Left cardiac atrium (tissue), 4 donors: ENCODE measurements at regions of chr6 and their contacts with region 1.

Region 1: GRCh38 chr6:7107578-7108195 is at the start of gene RREB1:
- DNase-seq: peak; percentile 71
- ATAC-seq: peak; percentile 74 to 80
- total RNA-seq, gene RREB1: 34.2 to 37.6 TPM

Region 2: DNA sequence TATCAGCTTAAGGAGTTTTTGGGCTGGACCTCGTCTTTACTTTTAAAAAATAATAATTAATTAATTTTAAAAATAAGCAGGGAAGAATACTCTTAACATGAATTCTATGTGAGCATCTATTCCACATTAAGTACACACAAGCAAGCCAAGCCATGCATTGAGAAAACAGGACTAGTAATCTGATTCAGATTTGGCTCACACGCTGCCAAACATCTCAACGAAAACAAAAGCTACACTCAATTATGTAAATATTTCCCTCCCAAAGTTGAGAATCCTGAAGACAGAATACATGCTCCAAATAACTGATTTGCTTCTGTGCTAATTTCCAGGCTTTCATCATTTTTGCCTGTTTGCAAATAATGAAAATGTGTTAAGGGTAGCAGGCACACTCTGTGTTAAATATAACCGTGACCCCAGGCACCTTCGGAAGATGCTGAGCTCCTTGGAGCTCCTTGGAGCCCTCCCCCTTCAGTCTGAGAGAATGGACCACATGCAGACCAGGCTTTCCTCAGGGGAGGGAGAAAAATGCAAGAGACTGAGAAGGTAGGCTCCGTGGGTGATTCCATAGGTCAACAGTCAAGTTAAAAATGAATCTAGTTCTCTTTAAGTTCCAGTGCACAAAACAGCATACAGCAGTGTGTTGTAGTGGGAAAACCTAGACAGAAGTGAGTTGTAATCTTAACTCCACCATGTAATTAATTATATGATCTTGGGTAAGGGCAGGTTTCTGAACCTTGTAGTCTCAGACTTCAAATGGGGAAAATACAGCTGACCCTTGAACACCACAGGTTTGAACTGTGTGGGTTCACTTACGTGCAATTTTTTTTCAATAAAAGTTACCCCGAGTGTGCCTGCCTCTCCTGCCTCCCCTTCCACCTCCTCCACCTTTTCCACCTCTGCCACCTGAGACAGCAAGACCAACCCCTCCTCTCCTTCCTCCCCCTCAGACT is 161.2 kb before region 1 on chr6:
- intact Hi-C with region 1: no loop called
- DNase-seq: no peak
- ATAC-seq: no peak

Region 3: DNA sequence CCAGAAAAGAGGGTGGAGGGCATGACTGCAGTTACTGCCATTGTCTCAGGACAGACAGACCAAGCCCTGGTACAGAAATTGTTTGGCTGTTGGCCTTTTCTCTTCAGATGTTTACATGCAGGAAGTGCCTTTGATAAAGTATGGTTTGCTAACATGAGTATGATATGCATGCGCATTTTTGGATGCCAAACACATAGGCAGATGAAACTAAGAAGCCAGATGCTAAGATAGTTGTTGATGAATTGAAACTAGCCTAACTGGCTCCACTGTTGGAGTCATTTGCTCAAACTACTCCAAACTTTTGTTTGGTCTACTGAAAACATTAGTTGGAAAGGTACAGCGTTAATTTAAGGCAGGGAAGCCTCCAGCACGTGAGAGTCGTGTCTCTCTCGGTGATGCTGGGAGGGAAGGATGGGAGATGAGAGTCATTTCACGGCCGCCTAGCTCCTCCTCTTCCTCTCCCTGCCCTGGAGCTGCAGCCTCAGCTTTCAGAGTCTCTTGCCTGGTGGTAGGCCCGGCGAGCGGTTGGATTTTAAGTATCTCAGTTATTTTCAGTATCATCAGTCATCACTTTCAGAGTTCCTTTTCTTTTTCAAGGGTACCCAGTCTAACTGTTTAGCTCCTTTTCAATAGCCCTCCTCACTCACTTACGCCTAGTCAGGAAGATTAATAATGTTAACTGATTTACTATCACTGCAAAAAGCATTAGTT is 29.8 kb after region 1 on chr6:
- intact Hi-C with region 1: loop called in 1 of 2 experiments (anchors 2 kb)
- DNase-seq: peak; percentile 65
- ATAC-seq: peak; percentile 16 to 54

Region 4: GRCh38 chr6:7224731-7225130 is 117.0 kb after region 1 on chr6:
- intact Hi-C with region 1: loop called in 1 of 2 experiments (anchors 10 kb)
- DNase-seq: peak; percentile 57
- ATAC-seq: peak in 1 of 2 donors; percentile 51